ENCODE measurements at regions of chrX and their contacts with region 1.

Region 1: DNA sequence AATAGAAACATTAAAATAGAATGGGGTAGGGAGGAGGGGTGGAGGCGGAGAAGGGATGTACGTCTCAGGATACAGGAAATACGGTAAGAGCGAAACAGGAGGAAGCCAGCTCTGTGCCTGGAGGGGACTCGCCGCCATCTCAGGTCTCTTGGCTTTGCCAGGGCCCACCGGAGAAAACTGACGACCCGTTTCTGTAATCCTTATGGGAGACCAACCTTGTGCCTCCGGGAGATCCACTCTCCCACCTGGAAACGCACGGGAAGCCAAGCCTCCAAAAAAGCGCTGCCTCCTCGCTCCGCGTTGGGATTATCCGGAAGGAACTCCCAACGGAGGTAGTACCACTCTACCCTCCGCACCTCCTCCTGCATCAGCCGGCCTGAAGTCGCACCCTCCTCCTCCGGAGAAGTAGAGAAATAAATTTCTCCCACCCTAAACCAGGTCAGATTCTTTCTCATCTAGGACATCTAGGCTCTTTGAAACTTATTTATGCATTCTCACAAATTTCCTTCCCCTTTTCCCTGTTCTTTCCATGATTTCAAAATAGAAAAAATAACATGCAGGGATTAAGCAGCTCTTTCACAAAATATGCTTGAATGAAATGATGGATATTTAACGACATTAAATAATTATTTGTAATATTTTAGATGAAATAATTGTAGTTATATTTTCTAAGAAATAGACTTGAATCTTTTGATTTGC is at the start of gene NBDY:
- DNase-seq: peak; percentile 26 to 75
- ATAC-seq: peak; percentile 98
- H3K4me3 ChIP-seq: peak within 1 kb of the TSS; percentile 62
- H3K27ac ChIP-seq: peak within 1 kb of the TSS; percentile 85 to 94
- H3K4me1 ChIP-seq: 0 out of 3 replicates have a peak, but pooled peaks cover 4% of the 10 kb centered on the region
- CTCF ChIP-seq: no peak
- EP300 ChIP-seq: no peak
- POLR2A ChIP-seq: peak; percentile 62
- RAD21 ChIP-seq: no peak
- polyA plus RNA-seq, gene NBDY: 64.8 and 72.8 TPM in 2 replicates

Region 2: GRCh38 chrX:56281789-56282188 is 447.5 kb before region 1 on chrX:
- CTCF ChIA-PET with region 1: interaction called, 39 read pairs
- POLR2A ChIA-PET with region 1: no interaction called
- DNase-seq: peak; percentile 1 to 40
- ATAC-seq: peak; percentile 56 to 58; a peak in 3 of 6 replicates
- H3K4me3 ChIP-seq: no peak overlapping the region
- H3K27ac ChIP-seq: no peak overlapping the region
- H3K4me1 ChIP-seq: no peaks in the 10 kb centered on the region
- CTCF ChIP-seq: peak; percentile 34
- EP300 ChIP-seq: no peak
- POLR2A ChIP-seq: no peak
- RAD21 ChIP-seq: peak; percentile 55; a peak in 4 of 5 replicates